Mammary epithelial cell (primary cell): ENCODE measurements at regions of chr16 and their contacts with region 1.

Region 1: DNA sequence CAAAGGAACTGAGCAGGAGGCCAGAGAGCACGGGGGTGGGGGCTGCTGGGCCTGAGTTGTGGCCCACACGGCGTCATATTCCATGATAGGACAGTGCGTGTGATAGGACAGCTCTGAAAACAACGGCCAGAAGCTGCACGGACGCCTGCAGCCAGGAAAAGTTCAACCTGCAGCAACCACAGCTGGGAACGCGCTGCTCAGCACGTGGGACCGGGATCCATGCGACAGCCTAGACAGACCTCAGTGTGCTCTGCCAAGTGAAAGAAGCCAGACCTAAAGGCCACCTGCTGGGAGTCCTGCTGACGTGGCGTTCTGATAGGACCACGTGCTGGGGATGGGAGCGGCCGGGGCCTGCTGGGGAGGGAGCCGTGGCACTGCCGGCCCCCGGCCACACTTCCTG is 21.6 kb downstream of the CTU2 start:
- DNase-seq: no peak
- H3K4me3 ChIP-seq: no peak overlapping the region
- H3K27ac ChIP-seq: no peak overlapping the region
- H3K4me1 ChIP-seq: no peaks in the 10 kb centered on the region
- H3K27me3 ChIP-seq: no peaks in the 10 kb centered on the region
- CTCF ChIP-seq: no peak

Region 2: GRCh38 chr16:88639231-88640038 is 88.4 kb before region 1 on chr16:
- CTCF ChIA-PET with region 1: no interaction called
- dilution Hi-C with region 1: loop called (anchors 5 kb)
- in situ Hi-C with region 1: no loop called
- intact Hi-C with region 1: no loop called
- DNase-seq: no peak
- H3K4me3 ChIP-seq: no peak overlapping the region
- H3K27ac ChIP-seq: no peak overlapping the region
- H3K4me1 ChIP-seq: peaks cover 23% of the 10 kb centered on the region
- H3K27me3 ChIP-seq: peaks cover 20% of the 10 kb centered on the region
- CTCF ChIP-seq: no peak

Region 3: GRCh38 chr16:88662843-88663606 is 64.8 kb before region 1 on chr16 and contains the start of gene MVD:
- CTCF ChIA-PET with region 1: no interaction called
- dilution Hi-C with region 1: loop called (anchors 5 kb)
- in situ Hi-C with region 1: no loop called
- intact Hi-C with region 1: no loop called
- DNase-seq: peak; percentile 98
- H3K4me3 ChIP-seq: peak within 1 kb of the TSS; percentile 89 to 100 (median 98)
- H3K27ac ChIP-seq: peak within 1 kb of the TSS; percentile 78
- H3K4me1 ChIP-seq: peaks cover 5% of the 10 kb centered on the region
- H3K27me3 ChIP-seq: no peaks in the 10 kb centered on the region
- CTCF ChIP-seq: no peak
- total RNA-seq, gene MVD: 57.7 to 171 TPM